Activated T-helper 2 cell treated with anti-CD3 and anti-CD28 coated beads, Interferon-gamma antibody, Interleukin-2, Interleukin-4, amounts not matched to agents 10 μg/mL and 5 μg/mL and 100 μg/mL, durations not matched to agents 14 hours and 24 hours and 36 hours (primary cell): ENCODE measurements at regions of chr5 and their contacts with region 1.

Region 1: GRCh38 chr5:1011226-1011631 is 2.6 kb downstream of the NKD2 start:
- DNase-seq: peak; percentile 49
- H3K4me3 Mint-ChIP-seq: peak overlapping the region; percentile 53
- H3K27ac Mint-ChIP-seq: no peak overlapping the region
- H3K4me1 Mint-ChIP-seq: peaks cover 24% of the 10 kb centered on the region
- H3K27me3 Mint-ChIP-seq: peaks cover 10% of the 10 kb centered on the region

Region 2: DNA sequence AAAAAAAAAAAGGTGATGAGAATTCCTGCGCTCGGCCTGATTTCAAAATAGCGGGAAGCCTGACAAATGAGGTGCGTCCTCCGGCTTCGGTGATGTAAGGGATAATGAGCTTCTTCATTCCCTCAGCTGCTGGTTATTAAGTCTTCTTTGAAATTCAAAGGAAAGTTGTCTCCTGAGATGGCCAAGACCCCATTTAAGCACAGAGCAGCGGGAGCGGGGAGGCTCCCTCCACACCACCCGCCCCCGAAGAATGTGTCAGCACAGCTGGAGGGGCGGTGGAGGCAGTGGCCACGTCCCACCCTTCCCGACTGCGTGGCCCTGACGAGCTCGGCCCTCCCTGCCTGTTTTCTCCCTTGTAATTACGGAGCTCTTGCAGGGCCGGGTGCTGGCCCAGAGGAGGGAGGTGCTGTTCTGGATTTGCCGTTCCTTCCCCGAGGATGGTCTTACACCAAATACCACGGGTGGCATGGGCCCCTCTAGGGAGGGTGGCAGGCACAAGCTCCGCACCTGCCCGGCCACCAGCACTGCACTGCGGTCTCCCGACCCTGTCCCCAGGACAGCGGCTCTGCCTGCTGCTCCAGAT is 518.0 kb before region 1 on chr5:
- intact Hi-C with region 1: no loop called
- DNase-seq: no peak
- H3K4me3 Mint-ChIP-seq: no peak overlapping the region
- H3K27ac Mint-ChIP-seq: no peak overlapping the region
- H3K4me1 Mint-ChIP-seq: no peaks in the 10 kb centered on the region
- H3K27me3 Mint-ChIP-seq: no peaks in the 10 kb centered on the region

Region 3: GRCh38 chr5:963673-964531 is 47.3 kb before region 1 on chr5:
- intact Hi-C with region 1: loop called (anchors 2 kb)
- DNase-seq: peak; percentile 82
- H3K4me3 Mint-ChIP-seq: peak overlapping the region; percentile 75
- H3K27ac Mint-ChIP-seq: peak overlapping the region; percentile 97
- H3K4me1 Mint-ChIP-seq: peaks cover 57% of the 10 kb centered on the region
- H3K27me3 Mint-ChIP-seq: peaks cover 1% of the 10 kb centered on the region

Region 4: GRCh38 chr5:1041225-1042129 is 30.2 kb after region 1 on chr5:
- intact Hi-C with region 1: no loop called
- DNase-seq: no peak
- H3K4me3 Mint-ChIP-seq: no peak overlapping the region
- H3K27ac Mint-ChIP-seq: no peak overlapping the region
- H3K4me1 Mint-ChIP-seq: no peaks in the 10 kb centered on the region
- H3K27me3 Mint-ChIP-seq: no peaks in the 10 kb centered on the region